Activated B cell treated with CpG ODN at 0.5 μM for 24 hours (primary cell): ENCODE measurements at regions of chr17 and their contacts with region 1.

Region 1: DNA sequence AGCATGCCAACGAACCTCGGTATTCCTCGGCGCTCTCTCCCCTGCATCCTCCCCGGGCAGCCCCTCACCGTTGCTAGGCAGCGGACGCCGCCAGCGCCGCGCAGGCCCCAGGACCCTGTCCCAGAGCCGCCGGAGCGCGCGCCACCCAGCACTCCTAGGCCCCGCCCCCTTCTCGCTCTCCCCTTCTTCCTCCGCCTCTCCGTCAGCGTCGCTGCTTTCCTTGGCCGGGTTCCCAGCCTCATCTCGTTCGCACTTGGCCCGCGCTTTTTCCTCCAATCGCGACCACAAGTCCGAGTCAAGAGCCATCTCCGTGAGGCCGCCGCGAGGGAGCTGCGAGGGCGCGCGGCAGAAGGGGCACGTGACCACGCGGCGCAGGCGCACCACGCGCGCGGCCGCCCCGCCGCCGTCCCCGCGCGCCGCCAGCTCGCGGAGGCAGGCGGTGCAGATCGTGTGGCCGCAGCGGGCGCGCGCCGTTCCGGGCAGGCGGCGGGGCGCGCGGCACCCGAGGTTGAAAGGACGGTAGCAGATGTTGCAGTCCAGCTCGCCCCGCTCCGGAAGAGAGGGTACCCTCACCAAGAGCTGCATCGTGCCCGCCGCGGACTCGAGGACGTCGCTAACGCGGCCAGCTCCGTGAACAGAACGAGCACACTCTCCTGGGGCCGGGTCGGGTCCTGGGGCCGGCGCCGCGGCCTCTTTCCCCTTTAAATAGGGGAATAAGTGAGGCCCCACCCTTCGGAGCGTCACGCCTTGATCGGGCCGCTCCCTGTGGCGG is at the start of gene RNF227:
- DNase-seq: peak; percentile 81
- ATAC-seq: peak; percentile 83
- H3K4me3 Mint-ChIP-seq: peak within 1 kb of the TSS; percentile 91
- H3K27ac Mint-ChIP-seq: peak within 1 kb of the TSS; percentile 87
- H3K4me1 Mint-ChIP-seq: peaks cover 23% of the 10 kb centered on the region
- H3K27me3 Mint-ChIP-seq: no peaks in the 10 kb centered on the region
- CTCF ChIP-seq: no peak
- total RNA-seq, gene RNF227: 2.5 and 2.8 TPM in 2 replicates

Region 2: DNA sequence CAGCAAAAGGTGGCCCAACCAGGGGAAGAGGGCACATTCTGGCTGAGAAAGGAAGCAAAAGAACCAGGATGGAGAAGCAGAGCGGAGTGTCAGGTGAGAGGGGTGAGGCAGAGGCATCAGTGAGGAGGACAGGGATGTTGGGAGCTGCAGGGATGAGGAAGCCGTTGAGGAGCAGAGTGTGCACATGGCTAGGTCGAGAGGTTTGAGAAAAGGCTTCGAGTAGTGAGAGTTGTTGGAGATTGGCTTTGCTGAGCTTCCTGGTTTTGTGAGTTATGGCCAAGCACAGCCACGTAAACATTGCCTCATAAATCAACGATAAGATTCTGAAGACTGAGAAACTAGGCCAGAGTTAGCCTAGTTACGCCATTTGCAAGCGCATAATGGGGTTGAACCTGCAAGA is 171.4 kb before region 1 on chr17:
- CTCF ChIA-PET with region 1: no interaction called
- POLR2A ChIA-PET with region 1: no interaction called
- intact Hi-C with region 1: loop called (anchors 2 kb)
- DNase-seq: no peak
- ATAC-seq: no peak
- H3K4me3 Mint-ChIP-seq: no peak overlapping the region
- H3K27ac Mint-ChIP-seq: no peak overlapping the region
- H3K4me1 Mint-ChIP-seq: no peaks in the 10 kb centered on the region
- H3K27me3 Mint-ChIP-seq: peaks cover 13% of the 10 kb centered on the region
- CTCF ChIP-seq: no peak

Region 3: GRCh38 chr17:7834962-7835813 is 80.6 kb before region 1 on chr17:
- CTCF ChIA-PET with region 1: no interaction called
- POLR2A ChIA-PET with region 1: interaction called, 10 read pairs
- intact Hi-C with region 1: no loop called
- DNase-seq: peak; percentile 79
- ATAC-seq: peak; percentile 47
- H3K4me3 Mint-ChIP-seq: peak overlapping the region; percentile 97
- H3K27ac Mint-ChIP-seq: peak overlapping the region; percentile 94
- H3K4me1 Mint-ChIP-seq: peaks cover 53% of the 10 kb centered on the region
- H3K27me3 Mint-ChIP-seq: peaks cover 14% of the 10 kb centered on the region
- CTCF ChIP-seq: no peak

Region 4: DNA sequence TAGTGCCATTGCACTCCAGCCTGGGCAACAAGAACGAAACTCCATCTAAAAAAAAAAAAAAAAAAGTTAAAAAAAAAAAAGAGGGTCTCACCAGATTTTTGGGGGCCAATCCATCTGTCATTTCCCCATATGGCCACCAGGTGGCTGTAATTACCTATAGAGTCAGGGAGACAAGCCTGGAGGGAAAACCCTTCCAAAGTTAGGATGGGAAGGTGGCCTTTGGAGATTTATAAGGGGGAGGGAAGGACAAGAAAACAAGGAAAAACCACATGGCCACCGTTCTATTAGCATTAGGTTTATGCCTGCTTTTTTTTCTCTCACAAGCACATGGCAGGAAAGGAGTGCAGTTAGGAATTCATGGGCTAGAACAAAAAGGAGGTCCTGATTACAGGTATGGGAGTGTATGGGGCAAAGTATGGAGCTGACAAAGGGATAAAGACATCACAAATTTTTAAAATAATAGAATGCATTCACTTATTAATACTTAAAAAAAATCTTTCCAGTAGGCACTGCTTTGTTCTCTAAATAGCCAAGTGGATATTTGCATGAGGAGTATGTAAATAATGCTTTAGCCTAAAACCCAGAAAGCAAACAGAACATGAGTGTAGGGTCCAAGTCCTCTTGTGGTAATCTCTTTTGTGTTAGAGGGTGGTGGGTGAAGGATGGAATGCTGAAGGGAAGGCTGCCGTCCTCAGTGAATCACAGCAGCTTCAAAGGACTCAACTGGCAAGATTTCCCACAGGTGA is 52.9 kb before region 1 on chr17:
- CTCF ChIA-PET with region 1: interaction called, 18 read pairs
- POLR2A ChIA-PET with region 1: interaction called, 5 read pairs
- intact Hi-C with region 1: loop called (anchors 1 kb)
- DNase-seq: no peak
- ATAC-seq: no peak
- H3K4me3 Mint-ChIP-seq: no peak overlapping the region
- H3K27ac Mint-ChIP-seq: no peak overlapping the region
- H3K4me1 Mint-ChIP-seq: peaks cover 11% of the 10 kb centered on the region
- H3K27me3 Mint-ChIP-seq: no peaks in the 10 kb centered on the region
- CTCF ChIP-seq: peak; percentile 90

Region 5: DNA sequence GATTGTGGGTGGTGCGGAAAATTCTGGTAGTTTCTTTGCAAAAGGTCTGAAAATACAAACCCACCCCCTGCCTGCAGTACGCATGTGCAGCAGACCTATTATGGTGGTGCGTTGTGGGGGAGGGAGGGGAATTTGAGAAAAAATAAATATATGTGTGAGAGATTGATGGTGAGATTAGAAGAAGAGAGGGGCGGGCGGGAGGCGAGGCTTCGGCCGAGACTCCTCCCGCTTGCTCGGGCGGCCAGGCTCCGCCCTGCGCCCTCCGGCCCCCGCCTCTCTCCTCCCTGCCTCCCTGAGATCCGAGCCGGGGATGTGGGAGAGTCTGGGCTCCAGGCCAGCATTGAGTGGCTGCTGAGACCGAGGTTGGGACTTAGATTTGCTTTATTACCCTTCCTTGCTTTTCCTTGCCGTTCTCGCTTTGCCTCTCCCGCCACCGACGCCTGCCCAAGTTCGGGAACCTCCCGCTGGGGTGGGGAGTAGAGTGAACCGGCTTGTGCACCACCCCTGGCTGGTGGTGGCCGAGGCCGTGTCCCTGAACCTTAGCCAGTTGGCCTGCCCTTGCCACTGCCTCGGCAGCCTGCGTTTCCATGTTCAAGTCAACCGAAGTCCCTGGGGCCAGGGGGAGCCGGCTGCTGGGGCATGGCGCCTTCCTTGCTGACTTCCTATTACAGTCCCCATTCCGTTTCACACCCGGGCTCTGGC is 28.2 kb before region 1 on chr17:
- CTCF ChIA-PET with region 1: no interaction called
- POLR2A ChIA-PET with region 1: interaction called, 4 read pairs
- intact Hi-C with region 1: loop called (anchors 1 kb)
- DNase-seq: peak; percentile 60
- ATAC-seq: peak; percentile 76
- H3K4me3 Mint-ChIP-seq: no peak overlapping the region
- H3K27ac Mint-ChIP-seq: no peak overlapping the region
- H3K4me1 Mint-ChIP-seq: peaks cover 8% of the 10 kb centered on the region
- H3K27me3 Mint-ChIP-seq: no peaks in the 10 kb centered on the region
- CTCF ChIP-seq: no peak

Region 6: DNA sequence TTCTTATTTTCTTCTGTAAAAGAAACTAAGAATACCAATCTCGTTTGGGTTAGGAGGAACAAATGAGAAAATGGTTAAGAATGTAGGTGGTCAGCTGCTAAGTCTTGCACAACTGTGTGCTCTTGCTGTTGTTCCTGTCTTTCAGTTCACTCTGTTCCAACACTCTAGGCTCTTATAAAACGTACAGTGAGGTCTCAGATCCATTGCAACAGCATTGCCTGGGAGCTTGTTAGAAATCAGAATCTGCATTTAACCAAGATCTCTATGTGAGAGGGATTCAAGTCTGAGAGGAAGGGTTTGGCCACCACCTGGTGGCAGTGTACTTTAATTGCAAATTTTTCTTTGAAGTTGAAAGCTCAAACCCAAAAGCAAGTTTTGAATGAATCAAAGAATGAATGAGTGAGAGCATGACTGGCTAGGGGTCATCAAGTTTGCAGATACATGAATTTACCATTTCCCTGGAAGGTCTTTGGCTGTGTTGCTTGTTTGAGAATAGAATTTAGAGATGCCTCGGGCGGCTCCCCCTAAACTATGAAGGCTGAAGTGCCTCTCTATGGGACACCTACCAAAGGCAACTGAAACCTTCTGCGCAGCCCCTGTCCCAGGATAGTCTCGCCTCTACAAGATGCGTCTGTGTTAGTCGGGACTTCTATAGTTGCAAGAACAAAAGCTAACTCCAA is 125.6 kb after region 1 on chr17:
- CTCF ChIA-PET with region 1: interaction called, 16 read pairs
- POLR2A ChIA-PET with region 1: no interaction called
- intact Hi-C with region 1: loop called (anchors 1 kb)
- DNase-seq: no peak
- ATAC-seq: no peak
- H3K4me3 Mint-ChIP-seq: no peak overlapping the region
- H3K27ac Mint-ChIP-seq: no peak overlapping the region
- H3K4me1 Mint-ChIP-seq: peaks cover 3% of the 10 kb centered on the region
- H3K27me3 Mint-ChIP-seq: peaks cover 31% of the 10 kb centered on the region
- CTCF ChIP-seq: no peak

Region 7: DNA sequence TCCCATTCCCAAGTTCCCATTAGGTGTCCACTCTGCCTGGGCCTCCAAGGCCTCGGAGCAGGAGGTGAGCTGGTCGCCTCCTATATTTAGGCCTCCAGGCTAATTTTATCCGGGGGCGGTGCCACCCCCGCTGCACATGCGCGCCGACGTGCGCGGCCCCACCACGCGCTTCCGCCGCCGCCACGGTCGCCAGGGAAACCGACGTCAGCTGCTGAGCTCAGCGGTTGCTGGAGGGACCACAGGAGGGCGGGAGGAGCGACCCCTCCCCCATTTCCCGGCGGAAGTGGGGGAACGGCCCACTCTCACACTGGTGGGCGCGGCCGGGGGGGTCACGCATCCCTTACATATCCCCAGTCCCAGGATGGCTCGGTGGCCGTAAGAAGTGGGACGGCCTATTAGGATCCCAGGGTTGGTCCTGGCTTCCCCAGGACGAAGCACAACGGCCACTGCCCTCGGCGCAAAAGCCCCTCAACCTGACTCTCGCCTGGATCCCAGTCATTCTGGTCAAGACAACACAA is 235.4 kb after region 1 on chr17:
- CTCF ChIA-PET with region 1: no interaction called
- POLR2A ChIA-PET with region 1: no interaction called
- intact Hi-C with region 1: no loop called
- DNase-seq: peak; percentile 89
- ATAC-seq: peak; percentile 60
- H3K4me3 Mint-ChIP-seq: peak overlapping the region; percentile 90
- H3K27ac Mint-ChIP-seq: peak overlapping the region; percentile 87
- H3K4me1 Mint-ChIP-seq: peaks cover 31% of the 10 kb centered on the region
- H3K27me3 Mint-ChIP-seq: no peaks in the 10 kb centered on the region
- CTCF ChIP-seq: no peak